B cell (primary cell): ENCODE measurements at regions of chr5 and their contacts with region 1.

Region 1: DNA sequence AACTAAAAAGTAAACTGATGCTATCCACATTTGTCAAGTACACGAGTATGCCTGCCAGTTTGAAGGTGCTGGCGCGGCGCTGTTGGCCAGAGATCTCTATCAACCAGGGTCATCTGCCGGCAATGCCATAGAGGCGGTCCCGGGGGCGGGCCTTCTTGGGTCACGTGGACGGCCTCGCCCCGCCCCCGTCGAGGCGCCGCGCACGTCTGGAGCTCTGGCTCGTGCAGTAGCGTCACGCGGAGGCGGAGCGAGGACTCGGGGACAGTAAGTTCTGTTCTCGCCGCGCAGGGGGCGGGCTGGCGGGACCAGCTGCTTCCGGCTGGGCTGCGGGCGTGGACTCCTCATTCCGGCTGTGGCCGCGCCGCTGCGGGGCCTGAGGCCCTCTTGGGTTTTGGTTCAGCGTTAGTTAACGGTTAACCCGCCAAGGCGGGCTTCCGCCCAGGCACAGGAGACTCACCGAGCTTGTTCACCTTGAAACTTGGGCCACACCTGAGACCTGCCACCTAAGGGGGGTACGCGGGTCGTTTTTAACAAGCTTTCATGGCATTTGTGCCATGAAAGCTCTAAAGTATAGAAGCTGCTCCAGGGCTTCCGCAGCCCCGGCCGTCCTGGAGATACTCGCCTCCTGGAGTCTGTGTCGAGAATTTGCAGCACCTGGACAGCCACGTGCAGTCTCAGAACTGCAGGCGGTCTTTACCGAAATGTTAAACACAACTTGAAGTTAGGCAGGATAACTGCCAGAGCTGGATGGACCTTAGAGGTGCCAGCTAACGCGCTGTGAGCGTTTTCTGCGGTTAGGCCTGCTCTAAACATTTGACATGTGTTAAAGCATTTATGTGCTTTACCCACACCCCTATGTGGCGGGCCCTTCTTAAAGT is at the start of gene RFESD:
- DNase-seq: peak; percentile 95
- ATAC-seq: peak; percentile 97
- H3K4me3 ChIP-seq: peak within 1 kb of the TSS; percentile 56 to 87 (median 80)
- H3K4me3 Mint-ChIP-seq: peak within 1 kb of the TSS; percentile 90
- H3K27ac ChIP-seq: peak within 1 kb of the TSS; percentile 68 to 75
- H3K27ac Mint-ChIP-seq: peak within 1 kb of the TSS; percentile 93
- H3K4me1 ChIP-seq: peaks cover 14 to 20% of the 10 kb centered on the region in 2 donors
- H3K4me1 Mint-ChIP-seq: peaks cover 18% of the 10 kb centered on the region
- H3K27me3 ChIP-seq: no peaks in the 10 kb centered on the region
- H3K27me3 Mint-ChIP-seq: no peaks in the 10 kb centered on the region
- CTCF ChIP-seq: peak; percentile 28
- total RNA-seq, gene RFESD: 1.9 and 3.0 TPM in 2 replicates

Region 2: GRCh38 chr5:95620030-95620869 is 26.5 kb before region 1 on chr5 and contains the start of gene GPR150:
- CTCF ChIA-PET with region 1: interaction called, 13 read pairs
- POLR2A ChIA-PET with region 1: interaction called, 6 read pairs
- intact Hi-C with region 1: loop called (anchors 1 kb)
- DNase-seq: peak; percentile 78
- ATAC-seq: peak; percentile 79
- H3K4me3 ChIP-seq: peak within 1 kb of the TSS; percentile 58 to 82 (median 70)
- H3K4me3 Mint-ChIP-seq: peak within 1 kb of the TSS; percentile 90
- H3K27ac ChIP-seq: no peak within 1 kb of the TSS
- H3K27ac Mint-ChIP-seq: peak within 1 kb of the TSS; percentile 74
- H3K4me1 ChIP-seq: peaks cover 23 to 26% of the 10 kb centered on the region in 2 donors
- H3K4me1 Mint-ChIP-seq: peaks cover 26% of the 10 kb centered on the region
- H3K27me3 ChIP-seq: peaks cover 0 to 7% (median 0%) of the 10 kb centered on the region in 4 experiments
- H3K27me3 Mint-ChIP-seq: no peaks in the 10 kb centered on the region
- CTCF ChIP-seq: no peak
- total RNA-seq, gene GPR150: 0.27 and 0.34 TPM in 2 replicates

Region 3: GRCh38 chr5:95730730-95731570 is 84.2 kb after region 1 on chr5 and contains the start of gene RHOBTB3:
- CTCF ChIA-PET with region 1: no interaction called
- POLR2A ChIA-PET with region 1: no interaction called
- intact Hi-C with region 1: loop called (anchors 2 kb)
- DNase-seq: peak; percentile 61
- ATAC-seq: peak; percentile 70
- H3K4me3 ChIP-seq: peak within 1 kb of the TSS; percentile 51 to 75 (median 60)
- H3K4me3 Mint-ChIP-seq: peak within 1 kb of the TSS; percentile 90
- H3K27ac ChIP-seq: no peak within 1 kb of the TSS
- H3K27ac Mint-ChIP-seq: peak within 1 kb of the TSS; percentile 78
- H3K4me1 ChIP-seq: peaks cover 8 to 13% of the 10 kb centered on the region in 2 donors
- H3K4me1 Mint-ChIP-seq: peaks cover 29% of the 10 kb centered on the region
- H3K27me3 ChIP-seq: peaks cover 0 to 10% (median 6%) of the 10 kb centered on the region in 4 experiments
- H3K27me3 Mint-ChIP-seq: peaks cover 12% of the 10 kb centered on the region
- CTCF ChIP-seq: no peak
- total RNA-seq, gene RHOBTB3: 5.0 and 5.3 TPM in 2 replicates

Region 4: GRCh38 chr5:95846554-95847260 is 199.9 kb after region 1 on chr5:
- CTCF ChIA-PET with region 1: interaction called, 127 read pairs
- POLR2A ChIA-PET with region 1: interaction called, 5 read pairs
- intact Hi-C with region 1: loop called (anchors 1 kb)
- DNase-seq: peak; percentile 82
- ATAC-seq: peak; percentile 77
- H3K4me3 ChIP-seq: no peak overlapping the region
- H3K4me3 Mint-ChIP-seq: no peak overlapping the region
- H3K27ac ChIP-seq: no peak overlapping the region
- H3K27ac Mint-ChIP-seq: peak overlapping the region; percentile 46
- H3K4me1 ChIP-seq: peaks cover 9 to 10% of the 10 kb centered on the region in 2 donors
- H3K4me1 Mint-ChIP-seq: peaks cover 12% of the 10 kb centered on the region
- H3K27me3 ChIP-seq: no peaks in the 10 kb centered on the region
- H3K27me3 Mint-ChIP-seq: no peaks in the 10 kb centered on the region
- CTCF ChIP-seq: peak; percentile 95

Region 5: DNA sequence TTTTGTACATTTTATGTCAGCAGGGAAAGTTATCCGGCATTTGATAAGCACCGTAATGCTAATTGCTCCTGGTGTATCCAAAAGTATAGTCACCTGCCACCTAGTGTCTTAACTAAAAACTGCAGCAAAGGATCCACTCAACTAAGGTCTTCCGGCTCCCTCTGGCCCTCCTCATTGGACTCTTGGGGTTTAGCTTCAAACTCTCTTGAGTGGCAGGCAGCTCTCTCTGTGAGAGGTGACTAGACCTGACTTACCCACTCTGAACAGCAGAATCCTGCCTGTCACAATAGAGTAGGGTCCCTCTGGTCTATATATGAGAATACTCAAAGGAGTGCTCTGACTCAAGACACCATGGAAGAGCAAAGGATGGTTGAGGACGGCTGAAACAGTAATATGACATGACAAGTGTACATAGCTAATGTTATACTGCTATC is 955.0 kb after region 1 on chr5:
- CTCF ChIA-PET with region 1: interaction called, 4 read pairs
- POLR2A ChIA-PET with region 1: no interaction called
- intact Hi-C with region 1: loop called (anchors 5 kb)
- DNase-seq: peak; percentile 72
- ATAC-seq: peak; percentile 70
- H3K4me3 ChIP-seq: no peak overlapping the region
- H3K4me3 Mint-ChIP-seq: no peak overlapping the region
- H3K27ac ChIP-seq: no peak overlapping the region
- H3K27ac Mint-ChIP-seq: no peak overlapping the region
- H3K4me1 ChIP-seq: no peaks in the 10 kb centered on the region
- H3K4me1 Mint-ChIP-seq: no peaks in the 10 kb centered on the region
- H3K27me3 ChIP-seq: peaks cover 0 to 7% (median 0%) of the 10 kb centered on the region in 4 experiments
- H3K27me3 Mint-ChIP-seq: peaks cover 22% of the 10 kb centered on the region
- CTCF ChIP-seq: peak; percentile 90